ENCODE measurements at regions of chr6 and their contacts with region 1.

Region 1: GRCh38 chr6:163956571-163957407 is 542.3 kb downstream of the QKI start:
- DNase-seq: peak; percentile 15 to 72 (median 40)
- ATAC-seq: peak; percentile 48
- H3K4me3 ChIP-seq: no peak overlapping the region
- H3K4me3 Mint-ChIP-seq: no peak overlapping the region
- H3K27ac ChIP-seq: no peak overlapping the region
- H3K27ac Mint-ChIP-seq: no peak overlapping the region
- H3K4me1 ChIP-seq: no peaks in the 10 kb centered on the region
- H3K4me1 Mint-ChIP-seq: no peaks in the 10 kb centered on the region
- H3K27me3 ChIP-seq: peaks cover under 1 to 8% of the 10 kb centered on the region in 2 experiments
- H3K27me3 Mint-ChIP-seq: peaks cover 49% of the 10 kb centered on the region
- CTCF ChIP-seq: peak; percentile 68

Region 2: DNA sequence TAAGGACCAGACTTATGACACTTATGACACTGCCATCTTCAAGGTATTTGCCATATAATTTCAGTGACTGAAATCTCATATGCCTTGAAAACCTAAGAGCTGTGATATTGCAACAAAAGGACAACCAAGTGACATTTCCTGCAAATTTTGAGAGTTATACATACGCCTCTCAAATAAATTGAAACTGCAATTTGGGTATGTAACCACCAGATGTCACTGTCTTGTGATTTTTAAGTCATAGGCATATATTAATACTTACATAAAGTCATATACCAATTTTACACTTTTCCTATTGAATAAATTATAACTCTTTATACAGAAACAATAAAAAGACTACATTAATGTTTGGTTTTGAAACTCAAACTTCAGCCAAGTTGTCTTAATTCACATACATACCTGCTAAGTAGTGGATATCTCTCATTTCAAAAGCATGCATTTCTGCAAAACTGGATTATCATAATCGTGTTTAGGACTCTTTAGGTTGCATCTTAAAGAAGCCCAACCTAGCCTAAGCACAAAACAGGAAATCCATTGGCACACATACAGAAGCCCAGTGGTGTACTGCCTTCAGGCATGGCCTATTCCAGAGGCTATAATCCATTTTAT is 1048.8 kb before region 1 on chr6:
- CTCF ChIA-PET with region 1: no interaction called
- POLR2A ChIA-PET with region 1: no interaction called
- intact Hi-C with region 1: loop called in 1 of 2 experiments (anchors 5 kb)
- DNase-seq: peak in 3 of 14 experiments; percentile 6 to 25 (median 21)
- ATAC-seq: no peak
- H3K4me3 ChIP-seq: no peak overlapping the region
- H3K4me3 Mint-ChIP-seq: no peak overlapping the region
- H3K27ac ChIP-seq: no peak overlapping the region
- H3K27ac Mint-ChIP-seq: no peak overlapping the region
- H3K4me1 ChIP-seq: no peaks in the 10 kb centered on the region
- H3K4me1 Mint-ChIP-seq: no peaks in the 10 kb centered on the region
- H3K27me3 ChIP-seq: no peaks in the 10 kb centered on the region
- H3K27me3 Mint-ChIP-seq: no peaks in the 10 kb centered on the region
- CTCF ChIP-seq: peak; percentile 30

Region 3: DNA sequence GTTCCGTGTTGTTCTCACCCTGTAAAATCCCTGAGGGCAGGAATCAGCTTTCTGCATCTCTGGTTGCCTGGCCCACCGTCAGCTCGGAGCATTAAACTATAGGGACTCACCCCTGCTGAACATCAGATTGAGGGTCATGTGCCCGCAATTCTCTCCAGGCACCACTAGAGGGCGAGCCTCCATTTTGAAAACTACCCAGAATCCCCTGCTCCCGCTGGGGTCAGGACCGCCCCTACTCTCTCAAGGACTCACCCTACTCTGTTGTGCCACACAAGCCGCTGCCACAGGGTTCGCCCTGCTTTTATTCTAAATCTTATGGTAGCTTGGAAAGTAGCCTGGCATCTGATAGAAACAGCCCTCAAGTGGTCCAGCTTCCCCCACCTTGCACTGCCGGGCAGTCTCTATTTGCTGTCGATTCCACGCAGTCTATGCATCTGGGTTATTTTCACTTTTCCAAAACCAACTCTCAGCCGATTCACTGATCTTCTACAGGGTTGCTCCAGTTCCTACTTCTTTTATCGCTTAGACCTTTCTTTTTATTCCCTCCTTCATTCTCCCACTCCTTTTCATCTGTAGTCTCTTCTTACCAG is 786.4 kb before region 1 on chr6:
- CTCF ChIA-PET with region 1: no interaction called
- POLR2A ChIA-PET with region 1: no interaction called
- intact Hi-C with region 1: loop called in 1 of 2 experiments (anchors 5 kb)
- DNase-seq: peak in 5 of 14 experiments; percentile 3 to 43 (median 13)
- ATAC-seq: no peak
- H3K4me3 ChIP-seq: no peak overlapping the region
- H3K4me3 Mint-ChIP-seq: no peak overlapping the region
- H3K27ac ChIP-seq: no peak overlapping the region
- H3K27ac Mint-ChIP-seq: no peak overlapping the region
- H3K4me1 ChIP-seq: peaks cover 3% of the 10 kb centered on the region
- H3K4me1 Mint-ChIP-seq: no peaks in the 10 kb centered on the region
- H3K27me3 ChIP-seq: no peaks in the 10 kb centered on the region
- H3K27me3 Mint-ChIP-seq: peaks cover 3% of the 10 kb centered on the region
- CTCF ChIP-seq: peak; percentile 73

Region 4: DNA sequence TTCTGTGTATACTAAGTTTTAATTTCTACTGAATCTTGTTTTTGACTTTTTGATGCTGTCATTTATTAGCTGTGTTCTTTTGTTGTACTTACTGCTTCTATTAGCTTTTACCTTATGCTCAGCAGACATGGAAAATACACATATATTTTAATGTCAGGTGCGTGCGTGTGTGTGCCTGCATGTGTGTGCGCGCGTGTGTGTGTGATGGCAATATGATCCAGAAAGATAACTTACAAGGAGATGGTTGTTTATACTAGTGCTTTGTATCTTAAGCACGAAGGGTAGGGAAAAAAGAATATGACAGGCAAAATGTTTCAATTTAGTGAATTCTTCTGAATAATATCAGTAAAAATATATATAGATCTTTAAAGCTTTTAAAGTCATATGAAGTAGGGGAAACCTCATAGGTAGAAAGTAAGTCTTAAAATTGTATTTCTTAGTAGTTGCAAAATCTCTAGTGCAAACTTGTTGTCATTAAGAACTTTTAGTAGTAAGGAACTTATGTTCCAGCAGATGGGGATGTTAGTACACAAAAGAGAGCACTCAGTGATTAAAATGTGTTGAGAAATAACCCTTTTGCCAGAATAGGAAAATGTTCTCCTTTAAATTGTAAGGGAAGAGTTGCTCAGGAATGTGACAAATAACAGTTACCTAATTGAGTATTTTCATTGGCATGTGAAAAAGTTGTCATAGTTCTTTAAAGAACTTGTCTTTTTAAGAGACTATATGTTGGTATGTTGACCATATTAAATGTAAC is 529.1 kb before region 1 on chr6:
- CTCF ChIA-PET with region 1: no interaction called
- POLR2A ChIA-PET with region 1: no interaction called
- intact Hi-C with region 1: loop called in 1 of 2 experiments (anchors 5 kb)
- DNase-seq: peak in 3 of 14 experiments; percentile 52 to 61 (median 61)
- ATAC-seq: no peak
- H3K4me3 ChIP-seq: no peak overlapping the region
- H3K4me3 Mint-ChIP-seq: no peak overlapping the region
- H3K27ac ChIP-seq: no peak overlapping the region
- H3K27ac Mint-ChIP-seq: no peak overlapping the region
- H3K4me1 ChIP-seq: no peaks in the 10 kb centered on the region
- H3K4me1 Mint-ChIP-seq: peaks cover 63% of the 10 kb centered on the region
- H3K27me3 ChIP-seq: no peaks in the 10 kb centered on the region
- H3K27me3 Mint-ChIP-seq: no peaks in the 10 kb centered on the region
- CTCF ChIP-seq: peak; percentile 29

Measured in CD4-positive, alpha-beta T cell (primary cell).